Endothelial cell of umbilical vein (primary cell): ENCODE measurements at regions of chr16 and their contacts with region 1.

Region 1: DNA sequence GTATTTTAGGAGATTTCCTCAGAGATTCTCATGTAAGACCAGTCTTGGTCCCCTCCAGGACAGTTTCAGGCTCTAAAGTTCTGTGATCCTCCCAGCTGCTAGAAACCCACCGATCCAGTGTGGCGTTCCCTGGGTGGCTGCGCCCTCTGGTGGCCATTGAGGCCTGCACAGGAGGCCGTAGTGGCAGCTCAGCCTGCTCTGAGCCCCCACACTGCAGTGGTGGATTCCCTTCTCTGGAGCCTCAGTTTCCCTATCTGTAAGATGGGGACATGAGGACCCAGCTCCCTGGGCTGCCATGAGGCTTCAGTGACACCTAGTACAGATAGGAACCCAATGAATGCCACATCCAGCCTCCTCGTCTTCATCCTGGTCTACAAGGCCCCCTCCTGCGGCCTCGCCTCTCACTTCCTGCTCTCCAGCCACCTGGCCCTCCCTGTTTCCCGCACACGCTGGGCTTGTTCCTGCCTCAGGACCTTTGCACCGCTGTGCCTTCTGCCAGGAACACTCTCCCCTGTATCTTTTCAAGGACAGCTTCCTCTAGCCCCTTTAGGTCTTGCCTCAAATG is 16.5 kb downstream of the CCDC102A start:
- DNase-seq: peak; percentile 59
- H3K4me3 ChIP-seq: no peak overlapping the region
- H3K27ac ChIP-seq: no peak overlapping the region
- H3K4me1 ChIP-seq: peaks cover 3% of the 10 kb centered on the region
- H3K27me3 ChIP-seq: no peaks in the 10 kb centered on the region
- CTCF ChIP-seq: peak; percentile 97 to 98
- POLR2A ChIP-seq: no peak

Region 2: GRCh38 chr16:57416122-57416509 is 103.8 kb before region 1 on chr16:
- CTCF ChIA-PET with region 1: interaction called, 77 read pairs
- POLR2A ChIA-PET with region 1: no interaction called
- dilution Hi-C with region 1: no loop called
- intact Hi-C with region 1: loop called (anchors 1 kb)
- DNase-seq: no peak
- H3K4me3 ChIP-seq: no peak overlapping the region
- H3K27ac ChIP-seq: no peak overlapping the region
- H3K4me1 ChIP-seq: peaks cover 7% of the 10 kb centered on the region
- H3K27me3 ChIP-seq: no peaks in the 10 kb centered on the region
- CTCF ChIP-seq: no peak
- POLR2A ChIP-seq: no peak

Region 3: DNA sequence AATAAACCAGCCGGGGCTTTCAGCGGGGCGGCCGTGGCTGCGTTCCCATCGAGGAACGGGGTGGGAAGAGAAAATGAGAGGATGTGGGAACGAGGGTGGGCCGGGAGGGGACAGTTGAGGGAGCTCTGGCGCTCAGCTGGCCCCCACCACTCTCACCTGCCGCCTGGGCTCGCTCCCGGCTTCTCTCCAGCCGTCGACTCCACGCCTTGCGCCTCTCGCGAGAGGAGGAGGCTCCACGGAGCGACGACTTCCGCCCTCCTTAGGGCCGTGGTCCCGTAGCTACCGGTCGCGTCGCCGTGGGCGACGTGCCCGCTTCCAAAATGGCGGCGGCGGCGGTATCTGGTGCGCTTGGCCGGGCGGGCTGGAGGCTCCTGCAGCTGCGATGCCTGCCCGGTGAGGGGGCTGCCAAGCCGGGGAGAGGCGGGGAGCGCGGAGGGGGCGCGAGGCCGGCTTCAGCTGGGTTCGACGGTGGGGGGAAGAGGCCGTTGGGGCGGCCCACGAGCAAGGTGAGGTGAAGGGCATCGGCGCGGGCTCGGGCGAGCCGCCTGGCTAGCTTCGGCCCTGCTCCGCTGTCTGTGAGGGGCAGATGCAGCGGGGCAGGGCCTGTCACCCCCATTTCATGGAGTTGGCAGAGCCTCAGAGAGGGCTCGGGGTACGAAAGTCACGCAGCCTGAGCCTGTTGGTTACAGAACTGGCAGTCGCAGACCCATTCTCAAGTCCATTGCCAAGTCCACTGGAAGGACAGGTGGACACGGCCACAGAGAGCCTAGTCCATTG is 72.5 kb before region 1 on chr16 and contains the starts of genes CIAPIN1 and COQ9:
- CTCF ChIA-PET with region 1: interaction called, 29 read pairs
- POLR2A ChIA-PET with region 1: no interaction called
- dilution Hi-C with region 1: no loop called
- intact Hi-C with region 1: no loop called
- DNase-seq: peak; percentile 92
- H3K4me3 ChIP-seq: peak within 1 kb of the TSS; percentile 43 to 93 (median 78)
- H3K27ac ChIP-seq: peak within 1 kb of the TSS; percentile 56
- H3K4me1 ChIP-seq: peaks cover 12% of the 10 kb centered on the region
- H3K27me3 ChIP-seq: no peaks in the 10 kb centered on the region
- CTCF ChIP-seq: no peak
- POLR2A ChIP-seq: peak; percentile 94
- total RNA-seq, gene CIAPIN1: 70.9 and 77.9 TPM in 2 replicates
- total RNA-seq, gene COQ9: 42.1 and 42.5 TPM in 2 replicates

Region 4: GRCh38 chr16:57470683-57471082 is 49.2 kb before region 1 on chr16:
- CTCF ChIA-PET with region 1: interaction called, 24 read pairs
- POLR2A ChIA-PET with region 1: no interaction called
- dilution Hi-C with region 1: no loop called
- intact Hi-C with region 1: no loop called
- DNase-seq: peak; percentile 38
- H3K4me3 ChIP-seq: no peak overlapping the region
- H3K27ac ChIP-seq: no peak overlapping the region
- H3K4me1 ChIP-seq: peaks cover 9% of the 10 kb centered on the region
- H3K27me3 ChIP-seq: no peaks in the 10 kb centered on the region
- CTCF ChIP-seq: no peak
- POLR2A ChIP-seq: no peak

Region 5: GRCh38 chr16:57485916-57486857 is 33.7 kb before region 1 on chr16 and contains the start of gene DOK4:
- CTCF ChIA-PET with region 1: interaction called, 27 read pairs
- POLR2A ChIA-PET with region 1: no interaction called
- dilution Hi-C with region 1: no loop called
- intact Hi-C with region 1: no loop called
- DNase-seq: peak; percentile 36
- H3K4me3 ChIP-seq: peak within 1 kb of the TSS; percentile 49 to 72 (median 51)
- H3K27ac ChIP-seq: no peak within 1 kb of the TSS
- H3K4me1 ChIP-seq: peaks cover 6% of the 10 kb centered on the region
- H3K27me3 ChIP-seq: peaks cover 0 to 4% of the 10 kb centered on the region in 2 experiments
- CTCF ChIP-seq: no peak
- POLR2A ChIP-seq: no peak
- total RNA-seq, gene DOK4: 22.3 and 24.4 TPM in 2 replicates

Region 6: GRCh38 chr16:57530104-57530521 is 10.2 kb after region 1 on chr16:
- CTCF ChIA-PET with region 1: interaction called, 10 read pairs
- POLR2A ChIA-PET with region 1: no interaction called
- dilution Hi-C with region 1: no loop called
- intact Hi-C with region 1: loop called (anchors 1 kb)
- DNase-seq: peak; percentile 79
- H3K4me3 ChIP-seq: no peak overlapping the region
- H3K27ac ChIP-seq: no peak overlapping the region
- H3K4me1 ChIP-seq: peaks cover 30% of the 10 kb centered on the region
- H3K27me3 ChIP-seq: no peaks in the 10 kb centered on the region
- CTCF ChIP-seq: no peak
- POLR2A ChIP-seq: no peak

Region 7: GRCh38 chr16:57764341-57765159 is 244.7 kb after region 1 on chr16:
- CTCF ChIA-PET with region 1: no interaction called
- POLR2A ChIA-PET with region 1: no interaction called
- dilution Hi-C with region 1: no loop called
- intact Hi-C with region 1: no loop called
- DNase-seq: peak; percentile 71
- H3K4me3 ChIP-seq: no peak overlapping the region
- H3K27ac ChIP-seq: peak overlapping the region; percentile 56
- H3K4me1 ChIP-seq: peaks cover 4% of the 10 kb centered on the region
- H3K27me3 ChIP-seq: no peaks in the 10 kb centered on the region
- CTCF ChIP-seq: no peak
- POLR2A ChIP-seq: no peak